ENCODE measurements at regions of chr2 and their contacts with region 1.

Region 1: GRCh38 chr2:130181325-130181879 is at the start of gene SMPD4:
- DNase-seq: peak; percentile 95 to 97
- H3K4me3 ChIP-seq: peak within 1 kb of the TSS; percentile 79 to 97 (median 93)
- H3K27ac ChIP-seq: peak within 1 kb of the TSS; percentile 91 to 92
- H3K4me1 ChIP-seq: peaks cover 0 to 7% of the 10 kb centered on the region in 2 donors
- H3K27me3 ChIP-seq: no peaks in the 10 kb centered on the region
- CTCF ChIP-seq: no peak
- POLR2A ChIP-seq: peak; percentile 21
- total RNA-seq, gene SMPD4: 28.0 to 50.1 (median 41.3) TPM

Region 2: DNA sequence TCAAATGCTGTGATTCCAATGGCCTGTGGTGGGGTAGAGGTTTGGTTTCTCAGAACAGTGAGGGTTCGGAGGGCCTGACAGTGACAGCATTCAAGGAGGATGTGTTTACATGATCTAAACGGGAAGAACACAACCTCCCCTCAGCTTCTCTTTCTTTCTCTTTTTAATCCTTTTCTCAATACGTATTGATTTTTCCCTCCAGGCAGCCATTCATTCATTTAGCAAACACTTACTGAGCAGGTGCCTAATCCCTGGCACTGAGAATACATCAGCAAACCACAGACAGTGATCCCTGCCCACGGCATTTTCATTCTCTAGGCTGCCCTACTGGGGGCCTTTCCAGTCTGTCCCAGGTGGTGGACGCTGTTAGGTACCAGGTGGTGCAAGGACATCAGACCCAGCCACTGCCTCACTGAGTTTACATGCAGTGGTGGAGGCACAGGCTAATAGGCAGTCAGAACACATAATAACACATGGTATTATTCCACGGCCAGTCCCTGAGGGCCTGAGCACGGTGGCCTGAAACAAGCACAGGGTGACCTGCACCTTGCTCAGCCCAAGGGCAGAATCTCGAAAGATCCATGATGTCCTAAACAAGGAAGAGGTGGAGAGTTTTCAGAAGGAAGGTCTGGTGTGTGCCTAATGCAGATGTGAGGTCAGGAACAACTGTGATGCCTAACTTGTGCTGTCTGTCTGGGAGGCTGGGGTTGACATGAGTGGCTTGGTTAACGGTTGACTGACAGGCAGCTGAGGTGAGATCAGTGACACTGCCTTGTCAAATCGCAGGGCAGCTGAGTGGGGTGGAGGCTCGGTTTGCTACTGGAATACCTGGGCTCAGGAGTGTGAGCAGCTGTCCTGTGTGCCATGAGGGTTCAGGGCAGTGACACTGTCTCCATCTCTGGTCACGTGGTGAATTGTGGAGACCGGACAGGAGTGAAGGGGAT is 1077.2 kb before region 1 on chr2:
- intact Hi-C with region 1: no loop called
- DNase-seq: no peak
- H3K4me3 ChIP-seq: no peak overlapping the region
- H3K27ac ChIP-seq: no peak overlapping the region
- H3K4me1 ChIP-seq: no peaks in the 10 kb centered on the region
- H3K27me3 ChIP-seq: no peaks in the 10 kb centered on the region
- CTCF ChIP-seq: no peak
- POLR2A ChIP-seq: no peak

Region 3: DNA sequence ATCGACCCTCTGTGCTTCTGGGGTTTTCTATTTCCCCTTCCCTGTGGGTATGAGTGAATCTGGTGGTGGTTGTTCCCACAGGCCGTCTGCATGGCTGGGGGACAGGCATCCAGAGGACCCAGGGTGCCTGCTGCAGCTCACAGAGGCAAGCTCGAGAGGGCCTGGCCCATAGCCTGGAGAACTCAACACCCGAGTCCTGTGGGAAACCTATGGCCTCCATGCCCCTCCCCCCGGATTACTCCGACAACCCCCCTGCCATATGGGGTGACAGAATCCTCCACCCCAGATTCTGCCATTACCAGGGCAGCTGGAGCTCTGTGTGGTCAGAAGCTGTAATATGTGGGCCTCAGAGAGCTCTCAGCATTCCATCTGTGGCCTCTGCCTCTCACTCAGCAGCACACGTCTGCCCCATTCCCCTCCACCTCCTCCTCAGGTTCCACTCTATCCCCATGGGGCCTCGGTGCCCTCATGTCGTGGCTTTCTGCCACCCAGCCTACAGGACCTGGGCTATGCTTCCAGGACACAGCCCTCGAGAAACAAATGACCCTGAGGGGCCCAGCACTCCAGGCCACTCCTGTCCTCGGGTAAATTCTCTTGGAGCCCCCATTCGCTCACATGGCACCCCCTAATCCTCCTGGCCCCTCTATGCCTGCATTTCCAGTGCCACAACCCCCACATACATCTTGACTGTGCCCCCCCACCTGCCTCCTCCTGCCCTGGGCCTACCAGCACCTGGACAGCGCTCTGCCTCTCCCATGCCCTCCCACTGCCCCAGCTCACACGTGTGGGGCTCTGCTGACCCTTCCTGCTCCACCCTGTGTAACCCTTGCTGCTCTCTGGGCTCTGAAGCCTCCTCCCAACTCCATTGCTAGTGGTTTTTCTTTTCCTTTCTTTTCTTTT is 1307.2 kb after region 1 on chr2:
- intact Hi-C with region 1: loop called (anchors 10 kb)
- DNase-seq: no peak
- H3K4me3 ChIP-seq: no peak overlapping the region
- H3K27ac ChIP-seq: no peak overlapping the region
- H3K4me1 ChIP-seq: peaks cover 0 to 7% of the 10 kb centered on the region in 2 donors
- H3K27me3 ChIP-seq: no peaks in the 10 kb centered on the region
- CTCF ChIP-seq: no peak
- POLR2A ChIP-seq: no peak

Measured in breast epithelium (tissue), 4 donors.